Stomach (tissue), 19 donors: ENCODE measurements at regions of chrX and their contacts with region 1.

Region 1: DNA sequence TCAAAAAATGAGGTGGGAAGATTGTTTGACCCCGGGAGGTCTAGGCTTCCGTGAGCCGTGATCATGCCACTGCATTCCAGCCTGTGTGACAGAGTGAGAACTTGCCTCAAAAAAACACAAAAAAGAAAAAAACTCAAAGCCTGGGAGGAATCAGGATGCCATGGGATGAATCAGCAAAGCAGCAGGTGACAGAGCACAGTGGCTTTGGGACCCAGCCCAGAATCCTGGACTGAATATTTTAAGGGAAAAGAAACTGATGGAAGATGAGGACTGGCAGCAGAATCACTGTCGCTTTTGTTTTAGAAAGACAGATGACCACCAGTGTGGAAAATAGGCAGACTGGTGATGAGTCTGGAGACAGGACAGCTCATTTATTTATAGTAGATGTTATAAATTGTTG is 16.6 kb downstream of the S100G start:
- DNase-seq: no peak
- H3K4me3 ChIP-seq: no peak overlapping the region
- H3K27ac ChIP-seq: no peak overlapping the region
- H3K4me1 ChIP-seq: peaks cover 0 to 5% (median 0%) of the 10 kb centered on the region in 4 donors
- H3K27me3 ChIP-seq: no peaks in the 10 kb centered on the region
- CTCF ChIP-seq: no peak
- EP300 ChIP-seq: no peak
- POLR2A ChIP-seq: no peak

Region 2: GRCh38 chrX:16436348-16437188 is 230.0 kb before region 1 on chrX:
- intact Hi-C with region 1: loop called (anchors 10 kb)
- DNase-seq: peak; percentile 80 to 84
- H3K4me3 ChIP-seq: no peak overlapping the region
- H3K27ac ChIP-seq: no peak overlapping the region
- H3K4me1 ChIP-seq: no peaks in the 10 kb centered on the region
- H3K27me3 ChIP-seq: peaks cover 0 to 4% (median 0%) of the 10 kb centered on the region in 3 donors
- CTCF ChIP-seq: peak in 4 of 7 experiments; percentile 41 to 66 (median 55)
- EP300 ChIP-seq: no peak
- POLR2A ChIP-seq: no peak